Activated CD4-positive, alpha-beta memory T cell treated with anti-CD3 and anti-CD28 coated beads for 36 hours (primary cell): ENCODE measurements at regions of chr10 and their contacts with region 1.

Region 1: GRCh38 chr10:32413513-32413912 is 32.4 kb upstream of the CCDC7 start:
- DNase-seq: peak; percentile 79
- H3K4me3 Mint-ChIP-seq: no peak overlapping the region
- H3K27ac Mint-ChIP-seq: peak overlapping the region; percentile 26
- H3K4me1 Mint-ChIP-seq: peaks cover 17% of the 10 kb centered on the region
- H3K27me3 Mint-ChIP-seq: no peaks in the 10 kb centered on the region

Region 2: DNA sequence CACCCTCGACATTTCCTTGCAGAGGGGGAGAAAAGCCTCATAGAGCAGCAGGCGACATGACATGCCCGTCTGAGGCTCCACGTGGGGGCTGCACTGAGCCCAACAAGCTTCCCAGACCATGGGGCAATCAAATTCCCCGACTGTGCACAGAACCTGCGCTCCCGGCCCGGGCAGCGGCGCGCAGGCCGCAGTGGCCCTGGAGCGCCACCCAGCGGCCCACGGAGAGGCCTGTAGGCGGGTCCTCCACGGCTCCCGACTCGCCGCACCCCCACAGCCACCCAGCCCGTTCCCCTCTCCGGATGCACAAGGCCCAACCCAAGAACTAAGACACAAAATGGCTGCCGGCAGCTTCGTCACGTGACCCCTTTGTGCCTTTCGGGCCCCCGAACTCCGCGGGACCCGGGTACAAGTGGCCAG is 67.4 kb before region 1 on chr10:
- CTCF ChIA-PET with region 1: no interaction called
- POLR2A ChIA-PET with region 1: no interaction called
- intact Hi-C with region 1: no loop called
- DNase-seq: peak; percentile 97
- H3K4me3 Mint-ChIP-seq: peak overlapping the region; percentile 94
- H3K27ac Mint-ChIP-seq: peak overlapping the region; percentile 99
- H3K4me1 Mint-ChIP-seq: peaks cover 63% of the 10 kb centered on the region
- H3K27me3 Mint-ChIP-seq: no peaks in the 10 kb centered on the region

Region 3: GRCh38 chr10:32445740-32446535 is 32.4 kb after region 1 on chr10 and contains the start of gene CCDC7:
- CTCF ChIA-PET with region 1: interaction called, 3 read pairs
- POLR2A ChIA-PET with region 1: interaction called, 7 read pairs
- intact Hi-C with region 1: loop called (anchors 1 kb)
- DNase-seq: peak; percentile 89
- H3K4me3 Mint-ChIP-seq: peak within 1 kb of the TSS; percentile 89
- H3K27ac Mint-ChIP-seq: peak within 1 kb of the TSS; percentile 96
- H3K4me1 Mint-ChIP-seq: peaks cover 13% of the 10 kb centered on the region
- H3K27me3 Mint-ChIP-seq: no peaks in the 10 kb centered on the region
- total RNA-seq, gene CCDC7: 8.6 to 11.6 TPM